Mammary epithelial cell (primary cell): ENCODE measurements at regions of chr21 and their contacts with region 1.

Region 1: DNA sequence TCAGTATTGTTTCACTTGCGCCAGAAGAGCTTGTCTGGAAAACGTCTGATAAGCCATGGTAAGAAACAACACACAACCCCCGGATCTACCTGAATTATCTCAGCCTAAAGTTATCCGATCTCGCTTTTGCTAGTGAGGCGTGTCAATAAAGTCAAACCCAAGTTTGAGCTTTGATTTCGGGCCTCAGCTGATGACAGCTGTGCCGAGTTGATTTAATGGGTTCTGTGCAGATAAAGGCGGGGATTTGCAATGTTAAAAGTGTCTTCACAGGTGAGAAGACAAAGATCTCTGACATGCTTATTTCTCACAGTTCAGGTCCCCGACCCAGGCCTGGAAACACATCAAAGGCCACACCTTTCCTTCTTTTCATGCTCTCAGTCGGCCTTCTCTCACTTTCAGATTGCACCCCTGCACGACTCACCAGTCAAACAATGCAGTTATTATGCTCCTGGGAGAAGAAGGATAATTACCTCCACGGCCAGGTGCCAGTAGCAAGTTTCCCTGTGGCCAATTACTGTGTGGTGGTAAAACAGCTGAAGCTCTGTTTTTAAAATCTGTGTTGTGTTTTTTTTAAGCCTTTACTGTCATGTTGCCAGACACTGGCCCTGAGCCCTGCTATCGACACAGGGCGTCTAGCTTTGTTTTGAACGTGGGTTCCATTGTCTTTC is 245.3 kb upstream of the RUNX1 start:
- DNase-seq: peak; percentile 96
- H3K4me3 ChIP-seq: peak overlapping the region in 2 of 3 experiments; percentile 3 to 22
- H3K27ac ChIP-seq: peak overlapping the region; percentile 88
- H3K4me1 ChIP-seq: peaks cover 19% of the 10 kb centered on the region
- H3K27me3 ChIP-seq: no peaks in the 10 kb centered on the region
- CTCF ChIP-seq: no peak

Region 2: GRCh38 chr21:34900376-34900775 is 394.0 kb before region 1 on chr21:
- CTCF ChIA-PET with region 1: no interaction called
- dilution Hi-C with region 1: no loop called
- in situ Hi-C with region 1: no loop called
- intact Hi-C with region 1: no loop called
- DNase-seq: peak; percentile 90
- H3K4me3 ChIP-seq: no peak overlapping the region
- H3K27ac ChIP-seq: no peak overlapping the region
- H3K4me1 ChIP-seq: no peaks in the 10 kb centered on the region
- H3K27me3 ChIP-seq: no peaks in the 10 kb centered on the region
- CTCF ChIP-seq: no peak

Region 3: DNA sequence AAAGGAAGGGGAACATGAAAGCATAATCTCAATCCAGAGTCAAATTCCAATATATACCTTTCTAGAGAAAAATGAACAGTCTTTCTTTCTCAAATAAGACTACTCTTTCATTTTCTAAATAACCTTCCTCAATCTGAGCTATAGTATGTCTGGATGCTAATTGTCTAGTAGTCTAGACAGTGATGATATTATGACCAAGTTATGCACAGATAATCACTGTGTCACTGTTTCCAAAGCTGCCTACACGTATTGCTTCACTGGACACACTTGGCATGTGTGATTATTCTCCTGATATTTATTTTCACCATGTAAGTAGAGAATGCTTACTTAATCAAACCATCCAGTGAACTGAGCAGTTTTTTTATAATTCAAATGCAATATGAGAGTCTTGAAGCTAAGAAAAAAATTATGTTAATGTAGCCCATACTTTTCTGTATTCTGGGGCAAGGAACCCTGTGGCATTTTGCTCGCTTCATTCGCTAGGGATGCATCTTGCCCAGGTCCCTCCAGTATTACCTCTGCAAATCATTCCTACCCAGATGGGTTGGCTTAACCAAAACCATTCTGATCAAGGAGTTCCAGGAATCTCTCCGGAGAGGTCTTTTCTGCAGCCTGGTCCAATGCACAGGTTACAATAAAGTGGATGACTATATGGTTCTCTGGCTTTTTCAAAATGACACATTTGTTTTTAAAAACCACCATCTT is 57.9 kb after region 1 on chr21:
- CTCF ChIA-PET with region 1: no interaction called
- dilution Hi-C with region 1: loop called (anchors 10 kb)
- in situ Hi-C with region 1: no loop called
- intact Hi-C with region 1: no loop called
- DNase-seq: peak; percentile 57
- H3K4me3 ChIP-seq: no peak overlapping the region
- H3K27ac ChIP-seq: no peak overlapping the region
- H3K4me1 ChIP-seq: peaks cover 8% of the 10 kb centered on the region
- H3K27me3 ChIP-seq: no peaks in the 10 kb centered on the region
- CTCF ChIP-seq: no peak